Ascending aorta (tissue), 2 donors: ENCODE measurements at regions of chr3 and their contacts with region 1.

Region 1: GRCh38 chr3:152071924-152072323 is 196.8 kb upstream of the MBNL1 start:
- DNase-seq: no peak
- H3K4me3 ChIP-seq: no peak overlapping the region
- H3K27ac ChIP-seq: no peak overlapping the region
- H3K4me1 ChIP-seq: peaks cover 0 to 3% of the 10 kb centered on the region in 2 donors
- H3K27me3 ChIP-seq: no peaks in the 10 kb centered on the region
- CTCF ChIP-seq: peak; percentile 37 to 48 (median 45)

Region 2: DNA sequence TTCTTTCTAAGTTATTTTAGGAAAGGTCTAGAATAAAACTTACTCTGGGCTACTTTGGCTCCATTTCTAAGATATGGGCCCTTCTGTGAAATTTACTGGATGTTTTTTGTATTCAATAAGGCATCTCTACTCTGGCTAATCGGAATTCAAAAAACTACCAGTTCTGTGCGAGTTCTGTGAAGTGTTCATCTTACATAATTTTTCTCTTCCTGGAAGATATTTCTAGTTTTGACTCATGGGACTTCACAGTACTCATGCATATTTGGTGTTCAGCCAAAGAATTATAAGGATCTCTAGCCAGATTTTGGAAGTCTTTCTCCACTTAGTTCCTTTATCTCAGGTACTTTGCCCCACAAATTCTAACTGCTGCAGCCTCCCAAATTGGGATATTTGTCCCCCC is 150.4 kb after region 1 on chr3:
- intact Hi-C with region 1: loop called (anchors 10 kb)
- DNase-seq: no peak
- H3K4me3 ChIP-seq: peak overlapping the region in 1 of 2 donors; percentile 29
- H3K27ac ChIP-seq: peak overlapping the region; percentile 74 to 75
- H3K4me1 ChIP-seq: peaks cover 5 to 54% of the 10 kb centered on the region in 2 donors
- H3K27me3 ChIP-seq: no peaks in the 10 kb centered on the region
- CTCF ChIP-seq: no peak

Region 3: DNA sequence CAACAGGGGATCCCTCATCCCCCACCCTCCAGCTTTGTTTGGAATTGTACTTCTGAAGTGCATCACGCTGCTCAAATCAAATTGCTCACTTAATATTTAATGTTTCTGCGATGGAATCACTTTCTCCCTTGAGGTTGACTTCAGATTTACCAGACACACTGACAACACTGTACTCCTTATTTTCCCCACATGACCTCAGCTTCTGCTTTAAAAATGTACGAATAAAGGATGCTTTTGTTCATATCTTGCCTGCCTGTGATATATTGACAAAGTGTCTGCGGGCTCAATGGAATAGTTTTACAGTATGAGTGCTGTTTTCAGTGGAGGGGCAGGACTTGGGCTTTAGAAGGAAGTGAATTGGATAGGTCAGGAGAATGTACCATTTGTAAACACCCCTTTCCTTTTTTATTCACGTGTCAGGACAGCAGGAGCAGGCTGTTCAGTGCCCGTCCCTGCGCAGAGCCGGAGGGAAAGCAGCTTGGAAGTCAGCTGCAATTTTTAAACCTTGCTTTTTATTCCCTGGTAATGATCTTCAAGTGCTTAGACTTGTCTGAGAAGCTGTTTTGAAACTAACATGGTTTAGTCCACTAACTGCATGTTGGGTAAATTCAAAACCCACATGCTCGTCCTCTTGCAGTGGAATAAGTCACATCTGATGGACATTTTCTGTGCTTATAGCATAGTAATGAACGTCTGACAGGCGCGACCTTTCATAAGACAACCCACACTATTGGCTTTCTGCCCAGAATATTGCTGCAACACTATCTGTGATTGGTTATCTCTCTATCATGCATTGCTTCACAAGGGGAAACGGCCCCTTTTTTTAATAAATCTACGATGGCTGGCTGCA is 226.7 kb after region 1 on chr3:
- intact Hi-C with region 1: loop called (anchors 5 kb)
- DNase-seq: peak in 1 of 2 donors; percentile 84
- H3K4me3 ChIP-seq: peak overlapping the region; percentile 49 to 52
- H3K27ac ChIP-seq: peak overlapping the region; percentile 77 to 83
- H3K4me1 ChIP-seq: peaks cover 8 to 51% of the 10 kb centered on the region in 2 donors
- H3K27me3 ChIP-seq: no peaks in the 10 kb centered on the region
- CTCF ChIP-seq: no peak

Region 4: GRCh38 chr3:152348436-152349177 is 276.7 kb after region 1 on chr3:
- intact Hi-C with region 1: no loop called
- DNase-seq: no peak
- H3K4me3 ChIP-seq: no peak overlapping the region
- H3K27ac ChIP-seq: peak overlapping the region in 1 of 2 donors; percentile 34
- H3K4me1 ChIP-seq: peaks cover 0 to 40% of the 10 kb centered on the region in 2 donors
- H3K27me3 ChIP-seq: no peaks in the 10 kb centered on the region
- CTCF ChIP-seq: no peak

Region 5: DNA sequence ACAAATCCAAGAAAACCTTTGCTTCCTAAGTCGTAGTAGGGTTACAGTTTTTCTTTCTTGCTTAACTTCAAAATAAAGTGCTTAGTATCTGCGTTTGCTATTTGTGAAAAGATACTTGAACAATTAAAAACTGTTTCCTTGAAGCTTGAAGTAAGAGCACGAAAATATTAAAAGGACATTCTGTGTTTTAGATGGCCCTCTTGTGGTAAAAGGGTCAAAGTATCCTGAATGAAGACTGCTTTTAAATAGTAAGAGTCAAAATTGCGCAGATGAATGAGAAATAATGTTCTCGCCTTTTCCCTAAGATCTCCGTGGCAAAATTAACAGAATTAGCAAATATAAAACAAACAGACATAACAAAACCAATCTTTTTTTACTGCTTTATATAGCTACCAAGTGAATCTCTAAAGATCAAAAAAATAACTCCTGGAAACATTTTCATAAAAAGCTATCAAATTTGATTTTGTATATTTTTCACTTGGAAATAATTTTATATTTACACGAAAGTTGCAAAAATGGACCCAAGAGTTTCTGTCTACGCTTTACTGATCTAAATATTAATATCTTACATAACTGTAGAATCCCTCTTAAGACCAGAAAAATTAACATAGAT is 372.2 kb after region 1 on chr3:
- intact Hi-C with region 1: loop called (anchors 5 kb)
- DNase-seq: no peak
- H3K4me3 ChIP-seq: peak overlapping the region in 1 of 2 donors; percentile 24
- H3K27ac ChIP-seq: peak overlapping the region; percentile 32 to 43
- H3K4me1 ChIP-seq: peaks cover 3 to 56% of the 10 kb centered on the region in 2 donors
- H3K27me3 ChIP-seq: no peaks in the 10 kb centered on the region
- CTCF ChIP-seq: peak; percentile 42 to 65 (median 47)

Region 6: GRCh38 chr3:152524198-152525140 is 452.5 kb after region 1 on chr3:
- intact Hi-C with region 1: loop called (anchors 5 kb)
- DNase-seq: no peak
- H3K4me3 ChIP-seq: no peak overlapping the region
- H3K27ac ChIP-seq: no peak overlapping the region
- H3K4me1 ChIP-seq: no peaks in the 10 kb centered on the region
- H3K27me3 ChIP-seq: no peaks in the 10 kb centered on the region
- CTCF ChIP-seq: peak; percentile 46 to 86 (median 79)